Calu3 (cell line): ENCODE measurements at regions of chr6 and their contacts with region 1.

Region 1: GRCh38 chr6:32984605-32985389 is 16.4 kb downstream of the BRD2 start:
- DNase-seq: peak; percentile 97
- H3K4me3 Mint-ChIP-seq: no peak overlapping the region
- H3K27ac Mint-ChIP-seq: peak overlapping the region; percentile 9
- H3K4me1 Mint-ChIP-seq: peaks cover 44% of the 10 kb centered on the region
- H3K27me3 Mint-ChIP-seq: peaks cover 28% of the 10 kb centered on the region
- CTCF ChIP-seq: peak; percentile 93

Region 2: DNA sequence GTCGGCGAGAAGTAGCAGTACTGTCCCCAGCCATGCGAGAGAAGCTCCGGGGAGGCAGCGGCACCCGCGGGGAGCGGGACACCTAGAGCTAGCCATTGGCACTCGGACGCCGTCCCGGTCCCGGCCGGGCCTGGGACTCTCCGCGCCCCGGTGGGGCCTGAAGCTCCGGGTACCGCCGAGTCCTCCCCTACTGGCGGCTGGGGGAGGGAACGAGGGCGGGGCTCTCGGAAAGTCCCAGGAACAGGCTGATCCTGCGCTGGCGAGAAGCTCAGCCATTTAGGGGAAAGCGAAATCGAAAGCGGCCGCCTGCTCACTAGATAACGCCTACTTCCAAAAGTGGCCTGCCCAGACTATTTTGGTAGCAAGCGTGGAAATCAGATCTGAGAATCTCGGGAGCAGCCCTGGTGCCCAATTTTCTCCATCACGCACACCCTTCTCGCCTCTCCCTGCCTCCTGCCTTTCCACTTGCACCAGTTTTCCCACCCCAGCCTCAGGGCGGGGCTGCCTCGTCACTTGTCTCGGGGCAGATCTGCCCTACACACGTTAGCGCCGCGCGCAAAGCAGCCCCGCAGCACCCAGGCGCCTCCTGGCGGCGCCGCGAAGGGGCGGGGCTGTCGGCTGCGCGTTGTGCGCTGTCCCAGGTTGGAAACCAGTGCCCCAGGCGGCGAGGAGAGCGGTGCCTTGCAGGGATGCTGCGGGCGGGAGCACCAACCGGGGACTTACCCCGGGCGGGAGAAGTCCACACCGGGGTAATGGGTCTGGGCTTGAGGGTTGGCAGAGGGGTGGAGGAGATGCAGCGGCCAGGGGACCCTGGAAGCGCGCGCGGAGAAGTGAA is 131.0 kb before region 1 on chr6 and contains the starts of genes PSMB9 and TAP1:
- CTCF ChIA-PET with region 1: interaction called, 12 read pairs
- intact Hi-C with region 1: no loop called
- DNase-seq: peak; percentile 99
- H3K4me3 Mint-ChIP-seq: peak within 1 kb of the TSS; percentile 100
- H3K27ac Mint-ChIP-seq: peak within 1 kb of the TSS; percentile 92
- H3K4me1 Mint-ChIP-seq: peaks cover 30% of the 10 kb centered on the region
- H3K27me3 Mint-ChIP-seq: no peaks in the 10 kb centered on the region
- CTCF ChIP-seq: peak; percentile 87
- total RNA-seq, gene PSMB9: 120 and 201 TPM in 2 replicates
- total RNA-seq, gene TAP1: 75.1 and 141 TPM in 2 replicates

Region 3: DNA sequence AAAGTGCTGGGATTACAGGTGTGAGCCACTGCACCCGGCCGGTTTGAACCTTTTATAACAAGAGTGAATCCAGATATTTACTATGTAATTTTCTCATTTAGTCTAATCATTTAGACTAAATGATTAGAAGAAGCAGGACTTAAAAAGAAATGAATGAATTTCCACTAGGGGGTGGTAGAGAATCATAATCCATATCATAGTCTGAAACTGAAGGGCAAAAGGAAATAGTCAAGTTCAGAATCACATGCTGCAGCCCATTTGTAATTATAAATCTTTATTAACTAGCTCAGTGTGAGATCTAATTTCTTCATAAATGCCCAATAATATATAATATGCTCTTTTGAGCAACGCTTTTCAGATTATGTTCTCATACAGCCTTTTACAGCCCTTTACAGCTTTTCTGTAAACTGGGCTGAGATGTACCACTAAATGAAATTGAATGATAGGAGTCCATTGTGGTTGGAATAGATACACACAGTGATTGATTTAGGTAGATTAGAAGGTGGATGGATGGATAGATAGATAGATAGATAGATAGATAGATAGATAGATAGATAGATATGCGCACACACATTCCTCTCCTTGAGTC is 99.0 kb before region 1 on chr6:
- CTCF ChIA-PET with region 1: interaction called, 32 read pairs
- intact Hi-C with region 1: loop called (anchors 1 kb)
- DNase-seq: no peak
- H3K4me3 Mint-ChIP-seq: no peak overlapping the region
- H3K27ac Mint-ChIP-seq: no peak overlapping the region
- H3K4me1 Mint-ChIP-seq: peaks cover 23% of the 10 kb centered on the region
- H3K27me3 Mint-ChIP-seq: no peaks in the 10 kb centered on the region
- CTCF ChIP-seq: peak; percentile 64

Region 4: DNA sequence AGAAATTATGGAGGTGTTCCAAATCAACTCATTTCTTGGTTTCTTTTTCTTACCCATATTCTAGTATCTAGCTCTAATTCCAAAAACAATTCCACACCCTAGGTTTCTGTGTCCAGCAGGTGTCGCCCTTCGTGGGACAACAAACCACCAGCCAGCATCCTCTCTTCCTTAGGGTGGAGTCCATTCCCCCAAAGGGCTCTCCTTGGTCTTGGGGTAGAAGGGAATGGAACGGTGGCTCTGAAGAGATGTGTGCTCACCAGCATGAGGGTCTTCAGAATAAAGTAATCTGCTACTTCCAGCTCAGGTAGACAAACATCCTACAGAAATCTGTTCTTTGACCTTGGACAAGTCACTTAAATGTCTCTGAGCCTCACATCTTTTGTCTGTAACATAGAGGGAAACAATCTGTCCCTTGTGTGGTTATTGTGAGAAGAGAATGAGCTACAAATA is 51.1 kb before region 1 on chr6:
- CTCF ChIA-PET with region 1: interaction called, 90 read pairs
- intact Hi-C with region 1: loop called (anchors 1 kb)
- DNase-seq: peak; percentile 86
- H3K4me3 Mint-ChIP-seq: no peak overlapping the region
- H3K27ac Mint-ChIP-seq: no peak overlapping the region
- H3K4me1 Mint-ChIP-seq: peaks cover 10% of the 10 kb centered on the region
- H3K27me3 Mint-ChIP-seq: no peaks in the 10 kb centered on the region
- CTCF ChIP-seq: peak; percentile 87

Region 5: GRCh38 chr6:32947552-32948465 is 37.0 kb before region 1 on chr6:
- CTCF ChIA-PET with region 1: interaction called, 110 read pairs
- intact Hi-C with region 1: no loop called
- DNase-seq: peak; percentile 81
- H3K4me3 Mint-ChIP-seq: no peak overlapping the region
- H3K27ac Mint-ChIP-seq: no peak overlapping the region
- H3K4me1 Mint-ChIP-seq: peaks cover 31% of the 10 kb centered on the region
- H3K27me3 Mint-ChIP-seq: no peaks in the 10 kb centered on the region
- CTCF ChIP-seq: peak; percentile 96

Region 6: DNA sequence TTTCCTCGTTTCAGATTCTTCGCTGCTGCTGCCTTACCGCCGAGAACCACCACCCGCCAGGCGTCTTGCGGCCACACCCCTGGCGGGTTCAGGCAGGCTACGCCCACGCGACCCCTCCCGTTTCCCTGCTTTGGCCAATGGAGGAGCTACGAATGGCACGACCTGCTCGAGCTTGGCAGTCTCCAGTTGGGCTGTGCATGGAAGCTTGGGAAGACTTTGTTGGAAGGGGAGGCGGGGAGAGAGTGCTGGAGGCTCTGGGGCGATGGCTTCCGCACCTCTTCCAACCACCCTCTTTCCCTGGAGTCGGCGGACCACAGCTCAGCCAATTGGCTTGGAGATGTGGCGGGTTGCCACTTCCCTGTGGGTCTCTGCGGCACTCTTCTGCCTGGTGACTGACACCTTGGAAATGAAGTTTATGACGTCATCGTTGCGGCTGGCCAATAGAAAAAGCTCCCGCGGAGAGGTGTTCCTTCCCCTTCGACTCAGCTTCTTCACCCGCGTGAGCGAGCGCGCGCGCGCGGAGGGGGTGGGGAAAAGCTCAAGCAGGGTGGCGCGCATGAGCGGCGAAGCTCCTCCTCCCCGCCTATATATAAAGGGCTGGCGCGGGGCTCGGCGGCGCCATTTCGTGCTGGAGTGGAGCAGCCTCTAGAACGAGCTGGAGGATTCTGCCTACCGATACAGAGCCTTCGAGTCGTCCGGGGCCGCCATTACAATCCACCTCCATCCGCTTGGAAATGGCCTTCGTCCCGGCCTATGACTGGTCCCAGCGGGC is 13.0 kb before region 1 on chr6:
- CTCF ChIA-PET with region 1: interaction called, 143 read pairs
- intact Hi-C with region 1: no loop called
- DNase-seq: peak; percentile 100
- H3K4me3 Mint-ChIP-seq: peak overlapping the region; percentile 77
- H3K27ac Mint-ChIP-seq: peak overlapping the region; percentile 85
- H3K4me1 Mint-ChIP-seq: peaks cover 33% of the 10 kb centered on the region
- H3K27me3 Mint-ChIP-seq: no peaks in the 10 kb centered on the region
- CTCF ChIP-seq: no peak

Region 7: GRCh38 chr6:33008944-33009861 is 24.4 kb after region 1 on chr6 and contains the start of gene HLA-DOA:
- CTCF ChIA-PET with region 1: no interaction called
- intact Hi-C with region 1: no loop called
- DNase-seq: peak; percentile 60
- H3K4me3 Mint-ChIP-seq: peak within 1 kb of the TSS; percentile 43
- H3K27ac Mint-ChIP-seq: no peak within 1 kb of the TSS
- H3K4me1 Mint-ChIP-seq: peaks cover 18% of the 10 kb centered on the region
- H3K27me3 Mint-ChIP-seq: peaks cover 69% of the 10 kb centered on the region
- CTCF ChIP-seq: no peak
- total RNA-seq, gene HLA-DOA: 1.7 and 4.1 TPM in 2 replicates